ENCODE measurements at regions of chr19 and their contacts with region 1.

Region 1: GRCh38 chr19:45059278-45059965 is 16.9 kb downstream of the ZNF296 start:
- DNase-seq: peak; percentile 84 to 92 (median 86)
- H3K4me3 ChIP-seq: no peak overlapping the region
- H3K27ac ChIP-seq: no peak overlapping the region
- H3K4me1 ChIP-seq: no peaks in the 10 kb centered on the region
- H3K27me3 ChIP-seq: no peaks in the 10 kb centered on the region

Region 2: DNA sequence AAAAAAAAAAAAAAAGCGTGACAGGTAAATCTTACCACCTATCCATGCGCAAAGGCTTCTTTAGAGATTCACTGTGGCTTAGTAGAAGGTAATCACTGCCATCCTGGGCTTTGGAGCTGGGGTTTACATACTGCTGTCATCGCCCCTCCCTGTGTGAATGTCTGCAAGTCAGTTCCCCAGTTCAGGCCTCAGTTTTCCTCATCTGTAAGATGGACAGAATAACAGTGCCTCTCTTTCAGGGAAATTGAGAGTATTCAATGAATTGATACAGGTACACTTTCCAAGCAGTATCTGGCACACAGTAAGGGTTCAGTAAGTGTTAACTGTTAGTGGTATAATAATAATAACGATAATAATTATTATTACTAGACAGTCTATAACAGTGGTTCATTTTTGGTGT is 55.9 kb before region 1 on chr19:
- CTCF ChIA-PET with region 1: no interaction called
- POLR2A ChIA-PET with region 1: no interaction called
- DNase-seq: no peak
- H3K4me3 ChIP-seq: no peak overlapping the region
- H3K27ac ChIP-seq: no peak overlapping the region
- H3K4me1 ChIP-seq: peaks cover 0 to 14% (median 12%) of the 10 kb centered on the region in 4 experiments
- H3K27me3 ChIP-seq: no peaks in the 10 kb centered on the region

Region 3: DNA sequence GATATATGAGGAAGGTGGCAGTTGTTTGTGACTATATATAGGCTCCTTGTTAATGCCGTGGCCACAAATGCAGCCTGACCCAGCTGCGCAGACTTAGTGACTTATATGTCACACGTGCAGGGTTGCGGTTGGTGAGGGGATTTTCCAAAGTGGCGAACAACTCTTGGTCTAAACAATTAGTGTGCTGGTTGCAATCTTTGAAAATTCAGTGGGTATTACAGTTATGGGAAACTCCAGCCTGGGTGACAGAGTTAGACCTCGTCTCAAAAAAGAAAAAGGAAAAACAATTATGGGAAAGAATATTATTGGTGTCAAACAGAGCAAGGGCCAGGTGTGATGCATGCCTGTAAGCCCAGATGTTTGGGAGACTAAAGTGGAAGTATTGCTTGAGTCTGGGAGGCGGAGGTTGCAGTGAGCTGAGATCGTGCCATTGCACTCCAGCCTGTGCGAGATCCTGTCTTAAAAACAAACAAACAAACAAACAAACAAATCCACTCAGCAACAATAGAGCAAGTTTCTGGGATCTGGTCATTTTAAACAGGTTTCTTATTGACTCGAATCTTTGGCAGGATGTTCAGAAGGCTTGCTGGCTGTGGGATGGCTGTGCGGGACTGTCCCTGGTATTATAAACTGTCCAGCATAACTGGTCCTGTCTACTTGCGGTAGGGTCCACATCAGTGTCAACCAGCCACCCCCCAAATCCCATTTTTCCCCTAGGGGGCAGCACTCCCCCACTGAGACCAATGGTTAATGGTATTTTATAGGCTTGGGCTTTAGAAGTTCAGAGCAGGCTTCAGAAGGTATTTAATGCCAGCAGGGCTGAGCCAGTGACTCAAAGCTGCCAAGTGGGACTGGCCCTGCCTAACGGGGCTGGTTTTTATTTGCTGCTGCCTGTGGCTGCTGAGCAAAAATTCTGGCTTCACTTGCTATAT is 42.8 kb before region 1 on chr19:
- CTCF ChIA-PET with region 1: interaction called, 10 read pairs
- POLR2A ChIA-PET with region 1: interaction called, 5 read pairs
- DNase-seq: peak; percentile 67 to 82 (median 79)
- H3K4me3 ChIP-seq: no peak overlapping the region
- H3K27ac ChIP-seq: peak overlapping the region in 1 of 2 experiments; percentile 34
- H3K4me1 ChIP-seq: no peaks in the 10 kb centered on the region
- H3K27me3 ChIP-seq: no peaks in the 10 kb centered on the region

Region 4: DNA sequence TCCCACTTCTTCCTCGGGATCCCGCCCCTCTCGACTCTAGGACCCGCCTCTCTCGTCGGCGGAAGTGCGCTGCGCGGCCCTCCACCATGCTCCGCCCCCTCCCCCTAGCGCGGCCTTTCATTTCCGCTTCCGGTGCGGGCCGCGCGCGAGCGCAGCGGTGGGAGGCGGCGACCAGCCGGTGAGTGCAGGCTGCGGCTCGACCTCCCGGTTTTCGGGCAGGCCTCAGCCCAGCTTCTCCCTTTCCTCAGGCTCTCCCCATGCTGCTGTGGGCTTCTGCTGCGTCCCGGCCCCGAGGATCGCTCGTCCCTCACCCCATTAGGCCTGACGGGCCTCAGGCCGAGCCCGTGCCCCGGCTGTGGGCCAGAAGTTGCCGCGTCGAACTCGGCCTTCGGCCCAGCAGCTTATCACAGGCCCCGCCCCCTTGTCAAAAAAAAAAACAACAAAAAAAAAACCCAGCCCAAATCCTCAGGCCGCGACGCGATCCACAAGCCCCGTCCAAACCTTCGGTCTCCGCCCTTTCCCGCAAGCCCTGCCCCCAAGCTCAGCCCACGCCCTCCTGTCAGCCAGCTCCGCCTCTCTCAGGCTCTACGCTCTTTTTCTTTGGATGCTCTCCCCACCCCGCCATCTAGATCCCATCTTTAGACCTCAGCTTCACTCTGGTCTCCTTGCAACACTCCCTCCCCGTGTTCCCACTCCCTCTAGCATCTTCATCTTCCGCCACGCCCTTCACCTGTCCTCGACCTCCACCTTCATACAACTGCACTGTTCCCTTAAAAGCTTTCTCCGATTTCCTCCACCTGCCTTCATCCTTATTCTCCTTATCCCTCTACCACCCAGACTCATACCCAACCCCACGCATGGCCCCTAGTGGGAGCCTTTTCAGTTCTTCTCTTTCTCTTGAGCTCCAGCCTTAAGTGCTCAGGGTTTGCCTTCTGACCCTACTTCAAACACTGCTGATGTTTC is 20.2 kb before region 1 on chr19 and contains the start of gene CLASRP:
- CTCF ChIA-PET with region 1: interaction called, 59 read pairs
- POLR2A ChIA-PET with region 1: interaction called, 7 read pairs
- DNase-seq: peak; percentile 88 to 91 (median 89)
- H3K4me3 ChIP-seq: peak within 1 kb of the TSS; percentile 57 to 95 (median 90)
- H3K27ac ChIP-seq: peak within 1 kb of the TSS; percentile 89 to 96
- H3K4me1 ChIP-seq: peaks cover 5 to 26% (median 22%) of the 10 kb centered on the region in 4 experiments
- H3K27me3 ChIP-seq: no peaks in the 10 kb centered on the region

Region 5: GRCh38 chr19:45047188-45047797 is 12.1 kb before region 1 on chr19:
- CTCF ChIA-PET with region 1: interaction called, 59 read pairs
- POLR2A ChIA-PET with region 1: no interaction called
- DNase-seq: peak; percentile 74 to 92 (median 91)
- H3K4me3 ChIP-seq: peak overlapping the region in 5 of 7 experiments; percentile 8 to 61 (median 24)
- H3K27ac ChIP-seq: peak overlapping the region in 1 of 2 experiments; percentile 34
- H3K4me1 ChIP-seq: peaks cover 2 to 25% (median 19%) of the 10 kb centered on the region in 4 experiments
- H3K27me3 ChIP-seq: no peaks in the 10 kb centered on the region

Region 6: GRCh38 chr19:45075301-45076028 is 16.0 kb after region 1 on chr19:
- CTCF ChIA-PET with region 1: interaction called, 12 read pairs
- POLR2A ChIA-PET with region 1: no interaction called
- DNase-seq: peak; percentile 79 to 94 (median 92)
- H3K4me3 ChIP-seq: peak overlapping the region; percentile 32 to 86 (median 78)
- H3K27ac ChIP-seq: peak overlapping the region in 1 of 2 experiments; percentile 71
- H3K4me1 ChIP-seq: peaks cover 9 to 47% (median 41%) of the 10 kb centered on the region in 4 experiments
- H3K27me3 ChIP-seq: no peaks in the 10 kb centered on the region

Region 7: DNA sequence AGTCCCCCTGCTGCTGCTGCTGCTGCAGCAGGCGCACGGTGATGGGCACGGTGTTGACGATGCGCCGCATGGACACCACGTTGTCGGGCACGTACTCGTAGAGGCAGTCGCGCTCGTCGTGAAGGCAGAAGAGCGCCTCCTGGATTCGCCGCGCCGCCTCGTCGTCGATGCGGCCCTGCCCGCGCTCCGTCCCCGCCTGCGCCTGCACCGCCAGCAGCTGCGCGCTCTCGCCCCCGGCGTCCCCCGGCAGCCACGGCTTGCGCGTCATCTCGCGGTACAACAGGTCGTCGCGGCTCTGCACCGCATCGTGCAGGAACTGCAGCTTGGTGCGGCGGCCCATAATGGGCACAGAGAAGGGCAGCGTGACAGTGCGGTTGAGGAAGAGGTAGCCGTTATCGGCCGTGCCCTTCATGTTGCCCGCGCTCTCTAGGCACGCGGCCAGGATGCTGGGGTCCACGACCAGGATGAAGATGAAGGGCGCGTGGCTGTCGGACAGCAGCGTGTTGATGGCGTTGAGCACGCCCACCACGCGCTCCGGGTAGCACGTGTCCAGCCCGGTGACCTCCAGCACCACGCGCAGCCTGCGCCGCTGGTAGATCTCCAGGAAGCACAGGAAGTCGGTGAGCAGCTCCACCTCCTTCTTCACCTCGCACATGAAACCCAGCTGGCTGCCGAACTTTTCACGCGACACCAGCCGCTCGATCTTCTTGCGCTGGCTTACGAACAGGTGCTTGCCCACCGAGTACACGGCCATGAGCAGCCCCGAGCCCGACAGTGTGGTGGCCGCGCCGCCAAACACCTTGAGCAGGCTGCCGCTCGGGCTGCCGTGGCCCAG is 93.3 kb after region 1 on chr19:
- CTCF ChIA-PET with region 1: no interaction called
- POLR2A ChIA-PET with region 1: no interaction called
- DNase-seq: peak; percentile 59 to 88 (median 82)
- H3K4me3 ChIP-seq: peak overlapping the region in 5 of 7 experiments; percentile 19 to 63 (median 56)
- H3K27ac ChIP-seq: no peak overlapping the region
- H3K4me1 ChIP-seq: peaks cover 0 to 26% (median 23%) of the 10 kb centered on the region in 4 experiments
- H3K27me3 ChIP-seq: peaks cover 0 to 50% (median 8%) of the 10 kb centered on the region in 5 experiments

Region 8: GRCh38 chr19:45164577-45165335 is 105.3 kb after region 1 on chr19:
- CTCF ChIA-PET with region 1: no interaction called
- POLR2A ChIA-PET with region 1: no interaction called
- DNase-seq: peak; percentile 37 to 82 (median 81)
- H3K4me3 ChIP-seq: peak overlapping the region in 2 of 7 experiments; percentile 1 to 4
- H3K27ac ChIP-seq: no peak overlapping the region
- H3K4me1 ChIP-seq: peaks cover 0 to 44% (median 29%) of the 10 kb centered on the region in 4 experiments
- H3K27me3 ChIP-seq: no peaks in the 10 kb centered on the region

Measured in common myeloid progenitor, CD34-positive (primary cell).